CD14-positive monocyte (primary cell): ENCODE measurements at regions of chr15 and their contacts with region 1.

Region 1: GRCh38 chr15:43133430-43134156 is at the start of gene TMEM62:
- DNase-seq: peak; percentile 84 to 89 (median 87)
- H3K4me3 ChIP-seq: peak within 1 kb of the TSS; percentile 67 to 90 (median 73)
- H3K4me3 Mint-ChIP-seq: peak within 1 kb of the TSS; percentile 91 to 95
- H3K27ac ChIP-seq: peak within 1 kb of the TSS in 1 of 2 donors; percentile 89
- H3K27ac Mint-ChIP-seq: peak within 1 kb of the TSS; percentile 75 to 95 (median 91)
- H3K4me1 ChIP-seq: peaks cover 20 to 28% of the 10 kb centered on the region in 2 donors
- H3K4me1 Mint-ChIP-seq: peaks cover 29% of the 10 kb centered on the region
- H3K27me3 ChIP-seq: no peaks in the 10 kb centered on the region
- H3K27me3 Mint-ChIP-seq: peaks cover 0 to 6% (median 0%) of the 10 kb centered on the region in 3 donors
- CTCF ChIP-seq: no peak
- polyA plus RNA-seq, gene TMEM62: 10.5 to 11.3 (median 10.8) TPM

Region 2: DNA sequence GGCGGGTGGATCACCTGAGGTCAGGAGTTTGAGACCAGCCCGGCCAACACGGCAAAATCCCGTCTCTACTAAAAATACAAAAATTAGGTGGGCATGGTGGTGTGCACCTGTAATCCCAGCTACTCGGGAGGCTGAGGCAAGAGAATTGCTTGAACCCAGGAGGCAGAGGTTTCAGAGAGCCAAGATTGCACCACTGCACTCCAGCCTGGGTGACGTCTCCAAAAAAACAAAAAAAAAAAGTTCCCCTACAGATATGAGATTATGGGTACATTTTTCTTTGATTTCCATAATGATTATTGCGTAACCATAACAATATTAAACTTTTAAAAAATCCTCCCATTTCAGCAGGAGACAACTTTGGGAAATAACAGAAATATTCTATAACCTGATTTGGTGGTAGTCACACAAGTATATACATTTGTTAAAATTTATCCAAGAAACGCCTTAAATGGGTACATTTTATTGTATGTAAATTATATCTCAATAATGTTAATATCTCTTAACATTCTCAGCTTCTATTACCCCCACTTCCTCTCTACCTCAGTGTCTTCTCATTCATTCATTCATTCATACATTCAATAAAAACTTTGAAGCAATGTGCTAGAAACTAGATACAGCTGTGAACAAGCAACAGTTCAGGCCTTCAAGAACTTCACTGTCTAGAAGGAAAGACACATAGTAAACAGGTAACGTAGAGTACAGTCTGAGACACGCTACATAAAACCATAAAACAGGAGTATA is 34.3 kb before region 1 on chr15:
- intact Hi-C with region 1: loop called in 1 of 2 experiments (anchors 2 kb)
- DNase-seq: no peak
- H3K4me3 ChIP-seq: no peak overlapping the region
- H3K4me3 Mint-ChIP-seq: no peak overlapping the region
- H3K27ac ChIP-seq: no peak overlapping the region
- H3K27ac Mint-ChIP-seq: no peak overlapping the region
- H3K4me1 ChIP-seq: peaks cover 1 to 6% of the 10 kb centered on the region in 2 donors
- H3K4me1 Mint-ChIP-seq: peaks cover 25% of the 10 kb centered on the region
- H3K27me3 ChIP-seq: no peaks in the 10 kb centered on the region
- H3K27me3 Mint-ChIP-seq: no peaks in the 10 kb centered on the region
- CTCF ChIP-seq: no peak

Region 3: GRCh38 chr15:43187544-43188155 is 54.1 kb after region 1 on chr15:
- intact Hi-C with region 1: no loop called
- DNase-seq: peak; percentile 17 to 32 (median 23)
- H3K4me3 ChIP-seq: peak overlapping the region in 1 of 3 experiments; percentile 98
- H3K4me3 Mint-ChIP-seq: no peak overlapping the region
- H3K27ac ChIP-seq: no peak overlapping the region
- H3K27ac Mint-ChIP-seq: peak overlapping the region in 2 of 7 donors; percentile 36 to 74
- H3K4me1 ChIP-seq: peaks cover 8 to 19% of the 10 kb centered on the region in 2 donors
- H3K4me1 Mint-ChIP-seq: peaks cover 20% of the 10 kb centered on the region
- H3K27me3 ChIP-seq: no peaks in the 10 kb centered on the region
- H3K27me3 Mint-ChIP-seq: no peaks in the 10 kb centered on the region
- CTCF ChIP-seq: peak; percentile 64